ENCODE measurements at regions of chr4 and their contacts with region 1.

Region 1: DNA sequence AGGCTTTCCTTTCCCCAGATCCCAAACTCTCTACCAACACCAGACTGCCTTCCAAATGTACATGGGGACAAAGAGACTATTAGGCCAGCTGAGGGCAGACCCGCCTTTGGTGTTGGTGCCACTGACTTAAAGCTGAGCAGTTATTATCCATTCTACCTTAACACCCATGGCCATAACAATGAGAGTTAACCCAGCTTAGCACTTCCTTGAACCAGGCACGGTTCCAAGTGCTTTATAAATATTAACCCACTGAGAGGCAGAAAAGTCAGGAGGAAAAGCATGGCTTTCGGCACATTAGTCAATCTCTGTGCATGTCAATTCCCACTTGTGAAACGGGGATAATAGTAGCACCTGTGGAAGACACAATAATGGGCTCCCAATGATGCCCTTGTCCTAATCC is 243.1 kb upstream of the ANXA3 start:
- DNase-seq: no peak
- H3K4me3 ChIP-seq: no peak overlapping the region
- H3K27ac ChIP-seq: no peak overlapping the region
- H3K4me1 ChIP-seq: no peaks in the 10 kb centered on the region
- H3K27me3 ChIP-seq: no peaks in the 10 kb centered on the region
- CTCF ChIP-seq: no peak
- POLR2A ChIP-seq: no peak

Region 2: DNA sequence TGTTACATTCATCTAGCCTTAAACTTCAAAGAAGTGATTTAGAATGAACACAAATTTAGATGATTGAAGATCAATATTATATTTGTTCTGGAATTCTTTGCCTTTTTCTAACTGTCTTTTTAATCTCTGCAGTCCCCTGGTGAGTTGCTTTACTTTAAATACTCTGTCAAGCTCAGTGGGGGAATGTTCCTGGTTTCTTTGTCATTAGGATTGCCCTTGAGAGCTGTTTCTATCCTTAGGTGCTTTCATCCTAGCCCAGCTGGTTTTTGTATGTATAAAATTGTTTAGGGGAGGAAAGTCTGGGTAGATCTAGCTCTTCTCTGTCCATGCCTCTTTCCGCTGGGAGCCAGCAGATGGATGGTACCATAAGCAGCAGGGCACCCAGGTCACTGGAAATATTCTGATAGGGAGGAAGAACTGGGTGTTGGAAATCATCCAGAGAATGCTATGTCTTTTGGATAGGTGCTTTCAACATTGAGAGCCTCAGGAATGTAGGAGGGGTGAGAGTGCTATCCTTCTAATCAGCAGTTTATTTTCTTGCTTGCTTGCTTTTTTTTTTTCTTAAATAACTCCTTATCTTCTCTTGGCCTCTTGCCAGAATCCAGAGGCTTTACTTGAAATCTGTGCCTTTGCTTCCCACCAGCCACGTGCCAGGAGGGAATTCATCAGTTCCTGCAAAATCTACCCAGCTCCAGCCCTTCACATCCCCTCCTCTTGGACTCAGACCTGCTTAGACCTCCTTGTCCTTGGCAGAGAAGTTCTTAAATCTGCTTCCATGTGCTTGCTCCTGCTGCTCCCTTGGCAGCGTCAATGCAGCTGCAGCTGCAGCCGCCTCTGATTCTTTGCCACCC is 27.8 kb after region 1 on chr4:
- CTCF ChIA-PET with region 1: no interaction called
- POLR2A ChIA-PET with region 1: no interaction called
- dilution Hi-C with region 1: no loop called
- intact Hi-C with region 1: loop called (anchors 1 kb)
- DNase-seq: no peak
- H3K4me3 ChIP-seq: no peak overlapping the region
- H3K27ac ChIP-seq: no peak overlapping the region
- H3K4me1 ChIP-seq: no peaks in the 10 kb centered on the region
- H3K27me3 ChIP-seq: no peaks in the 10 kb centered on the region
- CTCF ChIP-seq: no peak
- POLR2A ChIP-seq: no peak

Region 3: GRCh38 chr4:79603681-79604080 is 1295.2 kb after region 1 on chr4:
- CTCF ChIA-PET with region 1: no interaction called
- POLR2A ChIA-PET with region 1: no interaction called
- dilution Hi-C with region 1: no loop called
- intact Hi-C with region 1: no loop called
- DNase-seq: no peak
- H3K4me3 ChIP-seq: no peak overlapping the region
- H3K27ac ChIP-seq: no peak overlapping the region
- H3K4me1 ChIP-seq: no peaks in the 10 kb centered on the region
- H3K27me3 ChIP-seq: no peaks in the 10 kb centered on the region
- CTCF ChIP-seq: no peak
- POLR2A ChIP-seq: no peak

Measured in endothelial cell of umbilical vein (primary cell).